Left ventricle myocardium superior (tissue), 1 donor: ENCODE measurements at regions of chr15 and their contacts with region 1.

Region 1: GRCh38 chr15:35209838-35210237 is 124.7 kb upstream of the NANOGP8 start:
- DNase-seq: no peak
- ATAC-seq: no peak

Region 2: GRCh38 chr15:35150361-35150760 is 59.5 kb before region 1 on chr15:
- intact Hi-C with region 1: loop called (anchors 10 kb)
- DNase-seq: no peak
- ATAC-seq: no peak